CD4-positive, alpha-beta memory T cell (primary cell): ENCODE measurements at regions of chr4 and their contacts with region 1.

Region 1: DNA sequence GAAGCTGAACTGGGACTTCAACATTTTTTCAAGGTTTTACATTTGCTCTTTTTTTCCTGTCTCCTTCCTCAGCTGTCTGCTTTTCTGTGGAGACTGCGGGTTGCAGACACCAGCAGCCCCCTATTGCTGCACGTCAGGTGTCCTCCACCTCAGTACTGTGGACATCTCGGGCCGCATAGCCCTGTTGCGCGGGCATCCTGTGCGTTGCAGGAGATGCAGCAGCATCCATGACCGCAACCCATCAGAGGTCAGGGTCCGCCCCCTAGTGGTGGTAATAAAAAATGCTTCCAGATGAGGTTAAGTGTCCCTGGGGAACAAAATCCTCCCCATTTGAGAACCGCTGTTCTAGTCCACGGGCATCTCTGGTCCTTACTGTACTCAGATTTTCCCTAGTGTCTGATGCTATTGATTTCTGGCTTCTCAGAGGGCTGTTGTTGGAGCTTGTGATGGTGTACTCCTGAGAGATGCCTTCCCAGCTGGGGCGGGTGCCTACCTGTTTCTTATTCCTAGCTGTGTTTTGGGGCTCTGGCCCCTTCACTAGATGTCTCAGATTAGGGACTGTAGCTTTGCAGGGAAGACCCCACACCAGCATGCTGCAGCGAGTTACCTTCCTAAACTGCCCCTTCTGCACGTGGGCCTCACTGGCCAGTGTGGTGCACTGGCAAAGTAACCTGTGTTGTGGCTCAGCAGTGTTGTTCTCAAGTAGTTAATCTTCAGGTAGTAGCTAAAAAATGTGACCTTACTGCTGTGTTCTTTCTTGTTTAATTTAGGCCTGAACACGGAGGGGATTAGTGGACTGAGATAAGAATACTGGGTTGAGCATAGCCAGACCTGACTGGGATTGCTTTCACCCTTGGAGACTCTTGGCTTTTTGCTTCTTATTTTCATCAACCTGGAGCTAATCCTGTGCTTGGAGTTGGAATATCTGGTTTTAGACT is 28.2 kb downstream of the NSD2 start:
- DNase-seq: peak; percentile 68 to 79 (median 75)
- H3K4me3 ChIP-seq: no peak overlapping the region
- H3K4me3 Mint-ChIP-seq: peak overlapping the region in 4 of 8 donors; percentile 52 to 69 (median 56)
- H3K27ac ChIP-seq: no peak overlapping the region
- H3K27ac Mint-ChIP-seq: peak overlapping the region in 3 of 7 donors; percentile 19 to 85 (median 85)
- H3K4me1 ChIP-seq: peaks cover 6% of the 10 kb centered on the region
- H3K4me1 Mint-ChIP-seq: peaks cover 12 to 21% (median 14%) of the 10 kb centered on the region in 4 donors
- H3K27me3 ChIP-seq: no peaks in the 10 kb centered on the region
- H3K27me3 Mint-ChIP-seq: no peaks in the 10 kb centered on the region

Region 2: GRCh38 chr4:1746265-1746691 is 153.1 kb before region 1 on chr4:
- CTCF ChIA-PET with region 1: interaction called, 160 read pairs
- POLR2A ChIA-PET with region 1: interaction called, 3 read pairs
- intact Hi-C with region 1: no loop called
- DNase-seq: peak; percentile 53 to 67 (median 64)
- H3K4me3 ChIP-seq: no peak overlapping the region
- H3K4me3 Mint-ChIP-seq: no peak overlapping the region
- H3K27ac ChIP-seq: no peak overlapping the region
- H3K27ac Mint-ChIP-seq: no peak overlapping the region
- H3K4me1 ChIP-seq: no peaks in the 10 kb centered on the region
- H3K4me1 Mint-ChIP-seq: peaks cover 0 to 5% (median 0%) of the 10 kb centered on the region in 4 donors
- H3K27me3 ChIP-seq: no peaks in the 10 kb centered on the region
- H3K27me3 Mint-ChIP-seq: no peaks in the 10 kb centered on the region

Region 3: DNA sequence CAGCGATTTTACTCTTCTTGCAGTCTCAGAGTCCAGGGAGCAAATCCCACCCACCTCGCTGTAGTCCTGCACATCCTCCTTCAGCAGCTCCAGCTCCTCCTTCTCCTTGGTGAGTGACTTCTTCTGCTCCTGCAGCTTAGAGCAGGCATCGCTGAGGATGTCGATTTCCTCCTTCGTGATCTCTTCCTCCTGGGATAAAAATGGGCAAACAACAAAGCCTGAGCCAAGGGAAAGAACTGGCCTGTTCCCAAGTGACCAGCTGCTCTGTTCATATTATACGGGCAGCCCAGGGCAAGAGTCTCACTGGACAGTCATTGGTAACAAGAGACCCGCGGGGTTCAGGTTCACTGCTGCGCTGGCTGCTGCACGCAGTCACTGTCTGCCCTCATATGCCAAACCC is 80.1 kb before region 1 on chr4:
- CTCF ChIA-PET with region 1: interaction called, 32 read pairs
- POLR2A ChIA-PET with region 1: no interaction called
- intact Hi-C with region 1: no loop called
- DNase-seq: no peak
- H3K4me3 ChIP-seq: no peak overlapping the region
- H3K4me3 Mint-ChIP-seq: no peak overlapping the region
- H3K27ac ChIP-seq: no peak overlapping the region
- H3K27ac Mint-ChIP-seq: peak overlapping the region in 1 of 7 donors; percentile 29
- H3K4me1 ChIP-seq: no peaks in the 10 kb centered on the region
- H3K4me1 Mint-ChIP-seq: no peaks in the 10 kb centered on the region
- H3K27me3 ChIP-seq: no peaks in the 10 kb centered on the region
- H3K27me3 Mint-ChIP-seq: no peaks in the 10 kb centered on the region

Region 4: GRCh38 chr4:1846580-1846979 is 52.8 kb before region 1 on chr4:
- CTCF ChIA-PET with region 1: interaction called, 16 read pairs
- POLR2A ChIA-PET with region 1: no interaction called
- intact Hi-C with region 1: no loop called
- DNase-seq: no peak
- H3K4me3 ChIP-seq: no peak overlapping the region
- H3K4me3 Mint-ChIP-seq: no peak overlapping the region
- H3K27ac ChIP-seq: no peak overlapping the region
- H3K27ac Mint-ChIP-seq: peak overlapping the region in 1 of 7 donors; percentile 34
- H3K4me1 ChIP-seq: peaks cover 4% of the 10 kb centered on the region
- H3K4me1 Mint-ChIP-seq: peaks cover 4 to 31% (median 10%) of the 10 kb centered on the region in 4 donors
- H3K27me3 ChIP-seq: no peaks in the 10 kb centered on the region
- H3K27me3 Mint-ChIP-seq: no peaks in the 10 kb centered on the region

Region 5: DNA sequence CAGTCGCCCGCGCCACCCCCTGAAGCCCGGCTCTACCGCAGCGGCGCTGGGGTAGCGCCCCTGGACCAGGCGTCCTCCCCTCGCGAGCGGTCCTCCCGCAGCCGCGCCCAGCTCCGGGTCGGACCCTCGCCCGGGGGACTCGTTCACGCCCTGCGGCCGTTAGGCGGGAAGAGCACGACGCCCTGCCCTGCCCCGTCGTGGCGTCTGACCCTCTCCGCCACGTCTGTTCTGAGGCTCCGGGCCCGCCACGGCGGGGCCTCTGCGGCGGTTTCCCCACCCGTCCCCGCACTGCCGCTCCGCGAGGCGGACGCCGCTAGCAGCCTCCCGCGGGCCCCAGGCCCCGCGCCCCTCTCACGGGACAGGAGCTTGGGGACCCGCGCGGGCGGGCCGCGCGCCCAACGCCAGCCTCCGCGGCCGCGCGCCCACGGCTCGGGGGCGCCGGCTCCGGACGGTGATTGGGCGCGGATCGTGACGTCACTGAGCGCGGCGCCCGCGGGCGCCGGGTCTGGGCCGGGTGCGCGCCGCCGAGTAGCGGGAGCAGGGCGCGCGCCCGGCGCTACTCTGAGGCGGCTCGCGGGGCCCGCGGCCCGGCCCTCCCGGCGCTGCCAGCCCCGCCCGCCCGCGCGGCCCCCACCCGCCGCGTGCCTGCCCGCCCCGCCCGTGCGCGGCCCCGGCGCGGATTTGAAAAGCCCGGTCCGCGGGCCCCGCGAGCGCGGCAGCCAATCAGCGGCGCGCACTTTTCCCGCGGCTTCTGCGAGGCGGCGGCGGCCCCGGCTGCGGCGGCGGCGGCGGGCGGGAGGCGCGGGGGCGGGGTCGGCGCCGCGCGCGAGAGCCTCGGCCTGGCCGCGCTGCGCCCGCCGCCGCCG is 28.6 kb before region 1 on chr4 and contains the start of gene NSD2:
- CTCF ChIA-PET with region 1: interaction called, 39 read pairs
- POLR2A ChIA-PET with region 1: interaction called, 4 read pairs
- intact Hi-C with region 1: loop called (anchors 2 kb)
- DNase-seq: peak; percentile 84 to 89 (median 88)
- H3K4me3 ChIP-seq: peak within 1 kb of the TSS; percentile 47 to 84
- H3K4me3 Mint-ChIP-seq: peak within 1 kb of the TSS; percentile 86 to 97 (median 89)
- H3K27ac ChIP-seq: peak within 1 kb of the TSS; percentile 91
- H3K27ac Mint-ChIP-seq: peak within 1 kb of the TSS; percentile 95 to 99 (median 98)
- H3K4me1 ChIP-seq: peaks cover 36% of the 10 kb centered on the region
- H3K4me1 Mint-ChIP-seq: peaks cover 21 to 39% (median 32%) of the 10 kb centered on the region in 4 donors
- H3K27me3 ChIP-seq: no peaks in the 10 kb centered on the region
- H3K27me3 Mint-ChIP-seq: peaks cover 0 to 3% of the 10 kb centered on the region in 2 donors
- total RNA-seq, gene NSD2: 54.8 to 57.4 TPM

Region 6: DNA sequence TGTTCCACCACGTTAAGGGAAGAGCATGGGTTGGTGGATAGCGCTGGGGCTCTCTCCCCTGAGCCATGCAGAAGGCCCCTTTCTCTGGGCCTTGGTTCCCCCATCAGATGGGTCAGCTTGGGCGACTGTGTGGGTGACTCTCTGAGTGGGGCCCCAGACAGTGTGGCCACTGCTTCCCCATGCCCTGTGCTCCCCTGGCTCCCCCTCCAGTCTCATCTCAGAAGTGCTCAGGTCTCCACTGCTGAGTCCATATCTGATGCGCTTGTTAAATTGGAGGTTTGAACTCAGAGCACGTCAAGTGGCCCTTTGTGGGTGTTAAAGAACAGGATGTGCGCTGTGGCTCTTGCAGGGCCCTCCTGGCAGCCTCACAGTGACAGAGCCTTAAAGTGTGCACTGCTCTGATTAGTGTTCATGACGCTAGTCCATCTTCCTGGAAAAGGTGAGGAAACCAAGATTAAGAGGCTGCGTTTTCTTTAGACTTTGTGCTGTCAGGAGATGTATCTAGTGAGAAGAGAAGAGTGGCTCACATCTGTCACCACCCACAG is 49.5 kb after region 1 on chr4:
- CTCF ChIA-PET with region 1: no interaction called
- POLR2A ChIA-PET with region 1: no interaction called
- intact Hi-C with region 1: no loop called
- DNase-seq: no peak
- H3K4me3 ChIP-seq: no peak overlapping the region
- H3K4me3 Mint-ChIP-seq: no peak overlapping the region
- H3K27ac ChIP-seq: no peak overlapping the region
- H3K27ac Mint-ChIP-seq: peak overlapping the region in 2 of 7 donors; percentile 36 to 75
- H3K4me1 ChIP-seq: no peaks in the 10 kb centered on the region
- H3K4me1 Mint-ChIP-seq: no peaks in the 10 kb centered on the region
- H3K27me3 ChIP-seq: no peaks in the 10 kb centered on the region
- H3K27me3 Mint-ChIP-seq: no peaks in the 10 kb centered on the region

Region 7: GRCh38 chr4:2059034-2059725 is 159.8 kb after region 1 on chr4 and contains the start of gene NAT8L:
- CTCF ChIA-PET with region 1: no interaction called
- POLR2A ChIA-PET with region 1: no interaction called
- intact Hi-C with region 1: no loop called
- DNase-seq: no peak
- H3K4me3 ChIP-seq: no peak within 1 kb of the TSS
- H3K4me3 Mint-ChIP-seq: peak within 1 kb of the TSS in 1 of 8 donors; percentile 21
- H3K27ac ChIP-seq: no peak within 1 kb of the TSS
- H3K27ac Mint-ChIP-seq: no peak within 1 kb of the TSS
- H3K4me1 ChIP-seq: no peaks in the 10 kb centered on the region
- H3K4me1 Mint-ChIP-seq: peaks cover 0 to 8% (median 2%) of the 10 kb centered on the region in 4 donors
- H3K27me3 ChIP-seq: peaks cover 4% of the 10 kb centered on the region
- H3K27me3 Mint-ChIP-seq: peaks cover 19 to 22% of the 10 kb centered on the region in 2 donors
- total RNA-seq, gene NAT8L: not detected